Adrenal gland (tissue), 19 donors: ENCODE measurements at regions of chr21 and their contacts with region 1.

Region 1: GRCh38 chr21:46097336-46098293 is at the start of gene COL6A2:
- DNase-seq: peak; percentile 11 to 48 (median 33)
- H3K4me3 ChIP-seq: peak within 1 kb of the TSS in 2 of 4 donors; percentile 34 to 74
- H3K27ac ChIP-seq: peak within 1 kb of the TSS in 4 of 5 donors; percentile 27 to 88 (median 62)
- H3K4me1 ChIP-seq: no peaks in the 10 kb centered on the region
- H3K27me3 ChIP-seq: peaks cover 15% of the 10 kb centered on the region
- CTCF ChIP-seq: peak in 1 of 6 experiments; percentile 29
- POLR2A ChIP-seq: no peak
- total RNA-seq, gene COL6A2: 39.5 to 335 (median 163) TPM

Region 2: GRCh38 chr21:45973659-45974072 is 123.9 kb before region 1 on chr21:
- intact Hi-C with region 1: loop called in 1 of 2 experiments (anchors 10 kb)
- DNase-seq: peak; percentile 63 to 85 (median 74)
- H3K4me3 ChIP-seq: peak overlapping the region; percentile 1 to 63 (median 36)
- H3K27ac ChIP-seq: peak overlapping the region in 4 of 5 donors; percentile 51 to 93 (median 85)
- H3K4me1 ChIP-seq: peaks cover 13 to 33% of the 10 kb centered on the region in 2 donors
- H3K27me3 ChIP-seq: no peaks in the 10 kb centered on the region
- CTCF ChIP-seq: peak; percentile 26 to 62 (median 53)
- POLR2A ChIP-seq: no peak

Region 3: DNA sequence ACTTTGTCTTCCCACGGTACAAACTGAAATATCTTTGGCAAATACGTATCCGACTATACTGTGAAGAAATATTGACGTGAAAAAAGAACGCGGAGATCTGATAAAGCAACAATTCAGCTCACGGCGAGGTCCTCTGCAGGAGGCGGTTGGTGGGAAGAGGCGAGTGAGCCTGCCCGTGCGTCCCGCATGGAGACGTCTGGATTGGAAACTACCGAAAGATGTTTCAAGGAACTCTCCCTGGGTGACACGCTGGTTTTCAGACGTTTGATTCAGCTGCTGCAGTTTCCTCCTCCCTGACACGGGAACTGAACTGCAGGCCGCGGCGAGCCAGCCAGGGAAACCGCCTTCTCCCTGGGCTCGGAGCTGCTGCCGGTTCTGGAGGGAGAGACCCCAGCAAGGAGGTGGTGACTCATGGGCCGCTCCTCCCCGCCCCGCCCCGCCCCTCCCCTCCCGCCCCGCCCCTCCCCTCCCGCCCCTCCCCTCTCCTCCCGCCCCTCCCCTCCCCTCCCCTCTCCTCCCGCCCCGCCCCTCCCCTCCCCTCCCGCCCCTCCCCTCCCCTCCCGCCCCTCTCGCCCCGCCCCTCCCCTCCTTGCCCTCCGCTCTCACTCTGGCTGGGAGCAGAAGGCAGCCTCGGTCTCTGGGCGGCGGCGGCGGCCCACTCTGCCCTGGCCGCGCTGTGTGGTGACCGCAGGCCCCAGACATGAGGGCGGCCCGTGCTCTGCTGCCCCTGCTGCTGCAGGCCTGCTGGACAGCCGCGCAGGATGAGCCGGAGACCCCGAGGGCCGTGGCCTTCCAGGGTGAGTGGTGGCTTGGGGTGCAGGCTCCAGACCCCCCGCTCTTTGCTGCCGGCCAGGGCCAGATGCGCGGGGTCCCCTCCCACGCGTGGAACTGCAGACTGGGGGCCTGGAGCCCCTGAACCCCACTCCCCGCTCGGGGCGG is 116.2 kb before region 1 on chr21 and contains the start of gene COL6A1:
- intact Hi-C with region 1: loop called (anchors 10 kb)
- DNase-seq: peak; percentile 74 to 87 (median 82)
- H3K4me3 ChIP-seq: peak within 1 kb of the TSS in 2 of 4 donors; percentile 67 to 84
- H3K27ac ChIP-seq: peak within 1 kb of the TSS in 2 of 5 donors; percentile 80 to 84
- H3K4me1 ChIP-seq: peaks cover 0 to 3% of the 10 kb centered on the region in 2 donors
- H3K27me3 ChIP-seq: no peaks in the 10 kb centered on the region
- CTCF ChIP-seq: no peak
- POLR2A ChIP-seq: peak; percentile 49 to 66
- total RNA-seq, gene COL6A1: 28.9 to 362 (median 145) TPM

Region 4: DNA sequence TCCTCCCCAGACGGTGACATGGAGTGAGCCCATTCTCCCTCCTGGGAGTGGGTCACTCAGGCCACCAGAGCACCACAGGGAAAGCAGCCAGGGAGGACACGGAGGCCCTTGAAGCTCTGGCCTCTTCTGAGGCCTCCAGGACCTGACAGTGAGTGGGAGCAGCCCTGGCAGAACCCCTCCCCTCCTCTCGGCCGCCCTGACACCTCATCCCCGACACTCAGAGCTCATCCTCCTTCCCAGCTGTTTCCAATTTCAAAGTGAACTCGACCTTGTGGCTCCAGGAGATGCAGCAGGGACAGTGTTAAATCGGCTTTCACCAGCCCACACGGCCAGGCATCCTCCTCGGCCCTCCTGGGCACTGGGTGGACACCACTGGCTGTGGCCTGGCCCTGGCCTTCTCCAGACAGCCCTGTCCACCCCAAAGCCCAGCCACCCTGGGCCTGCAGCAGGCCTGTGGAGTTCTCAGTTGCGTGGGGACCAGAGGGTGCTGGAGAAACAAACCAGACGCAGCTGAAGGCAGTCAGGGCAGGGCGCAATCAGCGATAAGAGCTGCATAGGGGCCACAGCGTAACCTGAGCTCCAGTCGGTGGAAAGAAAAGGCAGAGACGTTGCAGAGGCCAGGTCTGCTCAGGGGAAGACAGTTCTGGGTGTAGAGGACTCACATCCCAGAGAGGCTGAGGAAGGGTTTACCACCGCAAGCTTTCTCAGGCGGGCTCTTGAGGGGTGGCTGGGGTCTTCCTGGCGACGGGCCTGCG is 30.7 kb after region 1 on chr21:
- intact Hi-C with region 1: no loop called
- DNase-seq: no peak
- H3K4me3 ChIP-seq: no peak overlapping the region
- H3K27ac ChIP-seq: no peak overlapping the region
- H3K4me1 ChIP-seq: no peaks in the 10 kb centered on the region
- H3K27me3 ChIP-seq: no peaks in the 10 kb centered on the region
- CTCF ChIP-seq: no peak
- POLR2A ChIP-seq: no peak